ENCODE measurements at regions of chr14 and their contacts with region 1.

Region 1: DNA sequence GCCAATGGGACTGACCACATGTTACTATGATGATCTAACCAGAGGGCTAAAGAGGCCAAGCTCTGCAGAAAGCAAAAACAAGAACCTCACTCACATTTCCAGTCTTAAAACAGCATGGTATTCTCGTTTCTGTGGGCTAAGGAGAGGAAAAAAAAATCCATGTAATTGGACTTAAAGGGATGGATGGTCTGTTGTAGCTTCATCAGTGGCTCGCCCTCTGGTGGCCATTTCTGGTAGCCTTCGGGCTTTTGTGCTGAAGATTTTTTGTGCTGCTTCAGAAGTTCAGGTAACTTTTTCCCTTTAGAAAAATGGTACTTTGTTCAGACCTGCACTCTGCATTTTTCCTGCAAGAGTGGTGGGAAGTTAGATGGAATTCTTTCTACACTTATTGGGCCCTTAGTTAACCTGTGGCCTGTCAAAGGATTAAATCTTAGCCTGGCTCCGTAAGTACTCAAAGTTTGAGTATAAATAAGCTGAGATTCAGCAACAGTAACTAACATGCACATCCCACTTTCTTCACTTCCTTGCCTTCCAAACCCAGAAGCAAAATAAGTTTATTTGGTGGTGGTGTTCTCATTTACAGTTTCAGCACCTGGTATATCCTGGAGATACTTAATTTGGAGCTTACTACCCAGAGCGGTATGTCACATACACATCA is 22.3 kb downstream of the DCAF4 start:
- DNase-seq: peak; percentile 81
- ATAC-seq: peak; percentile 44
- H3K4me3 Mint-ChIP-seq: no peak overlapping the region
- H3K27ac Mint-ChIP-seq: no peak overlapping the region
- H3K4me1 Mint-ChIP-seq: peaks cover 5% of the 10 kb centered on the region
- H3K27me3 Mint-ChIP-seq: no peaks in the 10 kb centered on the region

Region 2: DNA sequence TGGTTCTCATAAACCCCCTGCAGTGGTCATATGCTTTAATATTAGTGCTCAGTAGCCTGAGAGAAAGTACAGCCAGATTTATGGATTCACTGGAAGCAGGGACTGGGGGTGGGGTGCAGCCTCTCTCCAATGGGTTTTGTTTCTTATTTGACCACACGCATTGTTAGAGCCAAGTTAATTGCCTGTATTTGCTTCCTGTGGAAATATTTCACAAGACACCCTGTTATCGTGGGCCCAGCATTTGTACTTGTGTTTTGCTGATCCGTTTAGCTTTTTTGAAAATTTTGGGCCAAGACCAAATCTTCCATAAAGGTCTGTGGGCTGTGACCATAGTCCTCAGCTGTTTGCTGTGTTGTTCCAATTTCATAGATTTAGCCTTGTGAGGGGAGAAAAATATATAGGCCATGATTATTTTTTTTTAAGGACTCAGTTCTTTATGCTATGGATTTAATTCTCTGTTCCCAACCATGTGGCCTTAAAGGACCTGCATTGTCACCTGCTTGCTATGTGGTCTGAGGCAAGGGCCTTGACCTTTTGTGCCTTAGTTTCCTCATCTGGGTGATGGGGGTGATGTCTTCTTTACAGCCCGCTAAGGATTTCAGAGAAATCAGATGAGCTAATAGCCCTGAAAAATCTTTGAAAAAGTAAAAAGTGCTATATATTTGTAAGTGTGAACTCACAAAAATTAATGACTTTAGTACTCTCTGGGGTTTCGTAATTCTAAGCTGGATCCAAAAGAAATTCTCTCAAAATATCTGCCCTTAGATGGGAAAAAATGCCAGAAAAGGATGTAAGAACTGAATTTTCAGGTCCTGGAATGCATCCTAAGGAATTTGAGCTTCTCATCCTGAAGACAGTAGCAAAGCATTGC is 425.0 kb before region 1 on chr14:
- CTCF ChIA-PET with region 1: interaction called, 10 read pairs
- POLR2A ChIA-PET with region 1: no interaction called
- intact Hi-C with region 1: no loop called
- DNase-seq: no peak
- ATAC-seq: no peak
- H3K4me3 Mint-ChIP-seq: no peak overlapping the region
- H3K27ac Mint-ChIP-seq: no peak overlapping the region
- H3K4me1 Mint-ChIP-seq: peaks cover 47% of the 10 kb centered on the region
- H3K27me3 Mint-ChIP-seq: peaks cover 3% of the 10 kb centered on the region

Region 3: DNA sequence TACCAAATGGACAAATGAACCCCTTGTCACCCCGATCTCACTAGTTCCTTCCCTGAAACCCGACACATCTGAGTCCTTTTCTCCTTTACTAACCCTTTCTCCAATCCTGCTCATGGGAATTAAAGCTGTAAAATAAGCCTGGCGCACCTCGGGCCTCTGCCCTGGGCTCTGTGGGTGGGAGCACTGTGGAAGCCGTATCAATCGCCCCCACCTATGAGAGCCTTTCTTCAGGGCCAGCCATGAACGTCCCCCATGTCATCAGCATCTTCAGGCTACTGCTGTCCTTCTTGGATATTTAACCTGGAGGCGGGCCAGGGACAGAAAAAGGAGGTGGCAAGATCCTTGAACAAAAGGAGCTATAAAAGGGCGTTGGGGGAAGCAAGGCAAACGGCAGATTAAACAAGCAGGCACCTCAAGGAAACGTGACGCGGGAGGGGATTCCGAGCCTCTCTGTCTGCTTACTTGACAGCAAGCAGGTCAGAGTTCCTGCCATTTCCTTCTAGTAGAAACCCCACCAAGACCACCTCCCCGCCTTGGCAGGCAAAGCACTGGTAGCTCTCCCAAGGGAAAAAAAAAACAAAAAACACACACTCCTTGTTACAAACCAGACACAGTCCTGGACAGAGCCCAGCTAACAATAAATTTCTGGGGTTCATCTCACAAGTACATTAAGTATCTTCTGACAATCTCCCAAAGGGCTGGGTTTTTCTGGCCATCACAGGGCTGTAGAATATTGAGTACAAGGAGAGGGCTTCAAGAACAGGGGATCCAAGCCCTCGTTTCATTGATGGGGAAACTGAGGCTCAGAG is 117.6 kb before region 1 on chr14:
- CTCF ChIA-PET with region 1: no interaction called
- POLR2A ChIA-PET with region 1: no interaction called
- intact Hi-C with region 1: no loop called
- DNase-seq: no peak
- ATAC-seq: no peak
- H3K4me3 Mint-ChIP-seq: no peak overlapping the region
- H3K27ac Mint-ChIP-seq: no peak overlapping the region
- H3K4me1 Mint-ChIP-seq: no peaks in the 10 kb centered on the region
- H3K27me3 Mint-ChIP-seq: peaks cover 7% of the 10 kb centered on the region

Region 4: GRCh38 chr14:72986214-72986613 is 37.6 kb after region 1 on chr14:
- CTCF ChIA-PET with region 1: interaction called, 10 read pairs
- POLR2A ChIA-PET with region 1: no interaction called
- intact Hi-C with region 1: no loop called
- DNase-seq: peak; percentile 10
- ATAC-seq: peak; percentile 61
- H3K4me3 Mint-ChIP-seq: no peak overlapping the region
- H3K27ac Mint-ChIP-seq: no peak overlapping the region
- H3K4me1 Mint-ChIP-seq: no peaks in the 10 kb centered on the region
- H3K27me3 Mint-ChIP-seq: no peaks in the 10 kb centered on the region

Region 5: GRCh38 chr14:73295198-73295796 is 346.7 kb after region 1 on chr14:
- CTCF ChIA-PET with region 1: no interaction called
- POLR2A ChIA-PET with region 1: no interaction called
- intact Hi-C with region 1: no loop called
- DNase-seq: no peak
- ATAC-seq: no peak
- H3K4me3 Mint-ChIP-seq: no peak overlapping the region
- H3K27ac Mint-ChIP-seq: no peak overlapping the region
- H3K4me1 Mint-ChIP-seq: peaks cover 18% of the 10 kb centered on the region
- H3K27me3 Mint-ChIP-seq: no peaks in the 10 kb centered on the region

Measured in activated CD4-positive, alpha-beta T cell treated with anti-CD3 and anti-CD28 coated beads for 36 hours (primary cell).